ENCODE measurements at regions of chr3 and their contacts with region 1.

Region 1: DNA sequence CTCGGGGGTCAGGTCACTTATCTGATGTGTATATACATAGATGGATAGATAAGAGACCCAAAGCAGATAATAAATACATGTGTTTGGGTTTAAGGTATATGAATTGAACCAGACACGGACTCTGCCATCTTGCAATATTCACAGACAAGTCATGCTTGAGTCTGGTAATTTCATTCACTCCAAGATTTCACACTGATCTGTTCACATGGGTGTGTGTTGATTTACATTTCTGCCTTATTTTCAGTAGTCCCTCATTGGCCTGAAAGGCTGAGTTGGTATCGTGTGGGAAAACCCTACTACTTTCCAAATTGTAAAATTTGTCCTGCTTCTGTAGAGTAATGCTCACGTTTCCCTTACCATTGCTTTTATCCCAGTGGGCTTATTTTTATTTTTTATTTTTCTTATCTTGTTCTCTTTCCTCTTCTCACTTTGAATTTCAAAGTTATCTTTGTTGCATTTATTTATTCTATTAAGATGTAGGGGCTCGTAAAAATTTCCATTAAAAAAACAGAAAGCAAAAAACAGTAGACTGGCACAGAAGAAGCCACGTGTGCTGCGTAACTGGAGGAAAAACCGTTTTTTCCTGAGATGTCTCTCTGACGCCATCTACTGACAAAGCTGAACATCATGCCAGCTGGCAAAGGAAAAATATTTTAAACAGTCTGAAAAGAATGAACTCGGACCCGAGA is 10.8 kb upstream of the MFSD1 start:
- DNase-seq: peak; percentile 71
- H3K4me3 Mint-ChIP-seq: peak overlapping the region; percentile 63
- H3K27ac Mint-ChIP-seq: no peak overlapping the region
- H3K4me1 Mint-ChIP-seq: peaks cover 20% of the 10 kb centered on the region
- H3K27me3 Mint-ChIP-seq: no peaks in the 10 kb centered on the region
- CTCF ChIP-seq: peak; percentile 79

Region 2: DNA sequence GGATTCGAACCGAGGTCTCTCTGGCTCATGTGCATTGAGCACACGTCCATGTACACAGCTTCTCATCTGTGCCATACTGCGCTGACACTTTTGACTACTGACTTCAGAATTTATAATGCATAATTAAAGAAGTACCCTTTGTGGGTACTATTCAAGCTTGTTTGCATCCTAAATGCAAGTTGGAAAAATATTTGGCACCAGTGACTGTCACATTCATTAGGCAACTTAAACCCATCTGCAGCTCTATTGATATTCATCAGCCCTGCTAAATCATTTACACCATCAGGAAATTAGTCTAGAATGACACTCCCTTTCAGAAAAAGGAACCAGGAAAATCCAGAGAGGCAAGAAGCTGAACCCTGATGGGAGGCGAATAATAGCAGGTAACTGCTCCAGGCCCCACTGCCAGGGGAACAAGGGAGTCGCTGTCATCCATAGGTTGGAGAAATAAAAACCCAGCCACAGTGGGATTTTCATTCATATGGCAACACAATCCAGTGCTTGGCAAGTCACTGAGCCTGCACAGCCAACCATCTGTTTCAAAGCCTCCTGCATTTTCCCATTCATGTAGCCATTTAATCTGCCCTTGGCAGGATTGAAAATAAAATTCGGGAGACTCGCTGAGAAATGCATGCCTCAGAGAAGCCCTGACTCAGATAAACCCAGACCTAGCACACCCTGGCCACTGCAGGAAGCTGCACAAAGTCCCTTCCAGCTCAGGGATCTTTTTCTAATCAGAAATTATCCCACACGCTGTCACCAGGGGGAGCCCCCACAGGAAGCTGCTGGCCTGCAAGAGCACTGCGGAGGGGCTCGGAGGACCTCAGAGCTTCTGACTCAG is 1184.8 kb before region 1 on chr3:
- CTCF ChIA-PET with region 1: no interaction called
- POLR2A ChIA-PET with region 1: no interaction called
- intact Hi-C with region 1: loop called (anchors 10 kb)
- DNase-seq: peak; percentile 65
- H3K4me3 Mint-ChIP-seq: no peak overlapping the region
- H3K27ac Mint-ChIP-seq: no peak overlapping the region
- H3K4me1 Mint-ChIP-seq: no peaks in the 10 kb centered on the region
- H3K27me3 Mint-ChIP-seq: no peaks in the 10 kb centered on the region
- CTCF ChIP-seq: peak; percentile 83

Region 3: GRCh38 chr3:158659454-158660237 is 131.4 kb before region 1 on chr3:
- CTCF ChIA-PET with region 1: interaction called, 72 read pairs
- POLR2A ChIA-PET with region 1: interaction called, 12 read pairs
- intact Hi-C with region 1: loop called (anchors 1 kb)
- DNase-seq: peak; percentile 74
- H3K4me3 Mint-ChIP-seq: no peak overlapping the region
- H3K27ac Mint-ChIP-seq: no peak overlapping the region
- H3K4me1 Mint-ChIP-seq: no peaks in the 10 kb centered on the region
- H3K27me3 Mint-ChIP-seq: no peaks in the 10 kb centered on the region
- CTCF ChIP-seq: peak; percentile 69

Region 4: GRCh38 chr3:158722108-158722507 is 68.9 kb before region 1 on chr3:
- CTCF ChIA-PET with region 1: interaction called, 238 read pairs
- POLR2A ChIA-PET with region 1: interaction called, 13 read pairs
- intact Hi-C with region 1: loop called (anchors 1 kb)
- DNase-seq: no peak
- H3K4me3 Mint-ChIP-seq: no peak overlapping the region
- H3K27ac Mint-ChIP-seq: no peak overlapping the region
- H3K4me1 Mint-ChIP-seq: peaks cover 24% of the 10 kb centered on the region
- H3K27me3 Mint-ChIP-seq: no peaks in the 10 kb centered on the region
- CTCF ChIP-seq: no peak

Region 5: GRCh38 chr3:158801696-158802408 is 10.8 kb after region 1 on chr3 and contains the start of gene MFSD1:
- CTCF ChIA-PET with region 1: interaction called, 20 read pairs
- POLR2A ChIA-PET with region 1: interaction called, 18 read pairs
- intact Hi-C with region 1: no loop called
- DNase-seq: peak; percentile 88
- H3K4me3 Mint-ChIP-seq: peak within 1 kb of the TSS; percentile 81
- H3K27ac Mint-ChIP-seq: peak within 1 kb of the TSS; percentile 86
- H3K4me1 Mint-ChIP-seq: peaks cover 23% of the 10 kb centered on the region
- H3K27me3 Mint-ChIP-seq: no peaks in the 10 kb centered on the region
- CTCF ChIP-seq: no peak
- total RNA-seq, gene MFSD1: 28.9 and 34.7 TPM in 2 replicates

Region 6: GRCh38 chr3:160200353-160200752 is 1409.3 kb after region 1 on chr3:
- CTCF ChIA-PET with region 1: no interaction called
- POLR2A ChIA-PET with region 1: no interaction called
- intact Hi-C with region 1: no loop called
- DNase-seq: no peak
- H3K4me3 Mint-ChIP-seq: no peak overlapping the region
- H3K27ac Mint-ChIP-seq: no peak overlapping the region
- H3K4me1 Mint-ChIP-seq: no peaks in the 10 kb centered on the region
- H3K27me3 Mint-ChIP-seq: no peaks in the 10 kb centered on the region
- CTCF ChIP-seq: no peak

Measured in MCF 10A (cell line).